ENCODE measurements at regions of chr6 and their contacts with region 1.

Region 1: GRCh38 chr6:149508485-149508884 is 23.7 kb upstream of the ZC3H12D start:
- DNase-seq: peak; percentile 75 to 86 (median 79)
- H3K4me3 ChIP-seq: no peak overlapping the region
- H3K4me3 Mint-ChIP-seq: peak overlapping the region; percentile 2 to 75 (median 66)
- H3K27ac ChIP-seq: peak overlapping the region; percentile 53
- H3K27ac Mint-ChIP-seq: peak overlapping the region; percentile 76 to 98 (median 96)
- H3K4me1 ChIP-seq: peaks cover 32% of the 10 kb centered on the region
- H3K4me1 Mint-ChIP-seq: peaks cover 16 to 45% (median 30%) of the 10 kb centered on the region in 4 donors
- H3K27me3 ChIP-seq: no peaks in the 10 kb centered on the region
- H3K27me3 Mint-ChIP-seq: no peaks in the 10 kb centered on the region

Region 2: GRCh38 chr6:149473080-149474052 is 35.1 kb before region 1 on chr6:
- CTCF ChIA-PET with region 1: interaction called, 16 read pairs
- POLR2A ChIA-PET with region 1: interaction called, 14 read pairs
- intact Hi-C with region 1: no loop called
- DNase-seq: peak in 4 of 5 donors; percentile 38 to 58 (median 48)
- H3K4me3 ChIP-seq: no peak overlapping the region
- H3K4me3 Mint-ChIP-seq: peak overlapping the region; percentile 59 to 83 (median 68)
- H3K27ac ChIP-seq: peak overlapping the region; percentile 40
- H3K27ac Mint-ChIP-seq: peak overlapping the region; percentile 84 to 92 (median 88)
- H3K4me1 ChIP-seq: peaks cover 93% of the 10 kb centered on the region
- H3K4me1 Mint-ChIP-seq: peaks cover 49 to 85% (median 71%) of the 10 kb centered on the region in 4 donors
- H3K27me3 ChIP-seq: no peaks in the 10 kb centered on the region
- H3K27me3 Mint-ChIP-seq: no peaks in the 10 kb centered on the region

Region 3: DNA sequence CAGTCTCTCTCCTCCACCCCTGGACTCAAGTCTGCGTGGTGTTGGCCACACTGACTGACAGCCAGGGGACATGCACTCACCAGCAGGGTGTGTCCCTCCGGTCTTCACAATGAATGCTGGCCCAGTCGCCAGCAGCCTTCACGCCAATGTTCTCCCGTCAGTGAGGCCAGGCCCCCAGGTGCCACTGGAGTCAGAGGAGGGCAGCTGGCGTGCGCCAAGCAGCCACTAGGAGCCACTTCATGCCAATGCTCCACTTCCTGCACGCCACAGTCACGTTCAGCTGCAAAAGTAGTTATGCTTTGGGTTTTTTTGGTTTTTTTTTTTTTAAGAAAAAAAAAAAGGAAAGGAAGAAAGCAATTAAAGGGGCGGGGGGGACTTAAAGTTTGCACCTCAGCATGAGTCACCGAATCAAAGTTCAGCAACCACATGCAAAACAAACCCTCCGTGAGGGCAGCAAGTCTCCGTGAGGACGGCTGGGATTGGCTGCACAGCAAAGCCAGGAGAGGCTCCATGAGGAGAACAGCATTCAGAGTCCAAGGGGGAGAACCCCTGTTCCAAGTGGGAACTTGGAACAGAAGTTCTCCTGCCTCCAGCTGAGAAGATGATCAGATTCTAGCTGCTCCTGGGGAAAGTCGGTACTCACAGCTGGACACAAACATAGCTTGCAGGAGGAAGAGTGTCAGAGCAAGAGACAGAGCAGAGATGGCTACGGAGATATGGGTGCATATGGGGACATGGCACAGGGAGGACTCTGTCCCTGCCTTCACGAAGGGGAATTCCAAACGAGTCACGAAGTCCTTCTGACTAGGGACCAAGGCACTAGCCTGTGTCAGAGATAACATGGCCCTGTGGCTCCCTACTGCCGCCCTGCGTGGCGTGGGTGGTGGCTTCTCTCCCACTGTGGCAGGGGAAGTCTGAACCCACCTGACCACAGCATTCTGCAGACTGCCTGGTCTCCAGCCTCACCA is 23.5 kb before region 1 on chr6 and contains the start of gene ZC3H12D:
- CTCF ChIA-PET with region 1: no interaction called
- POLR2A ChIA-PET with region 1: no interaction called
- intact Hi-C with region 1: loop called (anchors 1 kb)
- DNase-seq: peak; percentile 83 to 96 (median 89)
- H3K4me3 ChIP-seq: peak within 1 kb of the TSS; percentile 76 to 82
- H3K4me3 Mint-ChIP-seq: peak within 1 kb of the TSS; percentile 90 to 98 (median 94)
- H3K27ac ChIP-seq: peak within 1 kb of the TSS; percentile 99
- H3K27ac Mint-ChIP-seq: peak within 1 kb of the TSS; percentile 98 to 100 (median 100)
- H3K4me1 ChIP-seq: peaks cover 32% of the 10 kb centered on the region
- H3K4me1 Mint-ChIP-seq: peaks cover 25 to 69% (median 38%) of the 10 kb centered on the region in 4 donors
- H3K27me3 ChIP-seq: no peaks in the 10 kb centered on the region
- H3K27me3 Mint-ChIP-seq: no peaks in the 10 kb centered on the region
- total RNA-seq, gene ZC3H12D: 91.5 to 106 TPM

Region 4: GRCh38 chr6:149493761-149494320 is 14.6 kb before region 1 on chr6:
- CTCF ChIA-PET with region 1: interaction called, 3 read pairs
- POLR2A ChIA-PET with region 1: interaction called, 100 read pairs
- intact Hi-C with region 1: loop called (anchors 1 kb)
- DNase-seq: no peak
- H3K4me3 ChIP-seq: no peak overlapping the region
- H3K4me3 Mint-ChIP-seq: peak overlapping the region in 6 of 8 donors; percentile 4 to 87 (median 36)
- H3K27ac ChIP-seq: peak overlapping the region; percentile 94
- H3K27ac Mint-ChIP-seq: peak overlapping the region; percentile 96 to 100 (median 98)
- H3K4me1 ChIP-seq: peaks cover 56% of the 10 kb centered on the region
- H3K4me1 Mint-ChIP-seq: peaks cover 33 to 64% (median 53%) of the 10 kb centered on the region in 4 donors
- H3K27me3 ChIP-seq: no peaks in the 10 kb centered on the region
- H3K27me3 Mint-ChIP-seq: no peaks in the 10 kb centered on the region